Caco-2 (cell line): ENCODE measurements at regions of chr3 and their contacts with region 1.

Region 1: GRCh38 chr3:67605377-67605776 is 49.0 kb downstream of the SUCLG2 start:
- DNase-seq: peak in 1 of 2 experiments; percentile 18
- H3K4me3 ChIP-seq: no peak overlapping the region
- H3K4me3 Mint-ChIP-seq: peak overlapping the region; percentile 33
- H3K27ac Mint-ChIP-seq: peak overlapping the region; percentile 55
- H3K4me1 ChIP-seq: peaks cover 9% of the 10 kb centered on the region; the same call in 1 of the 2 replicates
- H3K4me1 Mint-ChIP-seq: peaks cover 20% of the 10 kb centered on the region
- H3K27me3 ChIP-seq: no peaks in the 10 kb centered on the region
- H3K27me3 Mint-ChIP-seq: no peaks in the 10 kb centered on the region
- CTCF ChIP-seq: peak in 1 of 2 experiments; percentile 20

Region 2: DNA sequence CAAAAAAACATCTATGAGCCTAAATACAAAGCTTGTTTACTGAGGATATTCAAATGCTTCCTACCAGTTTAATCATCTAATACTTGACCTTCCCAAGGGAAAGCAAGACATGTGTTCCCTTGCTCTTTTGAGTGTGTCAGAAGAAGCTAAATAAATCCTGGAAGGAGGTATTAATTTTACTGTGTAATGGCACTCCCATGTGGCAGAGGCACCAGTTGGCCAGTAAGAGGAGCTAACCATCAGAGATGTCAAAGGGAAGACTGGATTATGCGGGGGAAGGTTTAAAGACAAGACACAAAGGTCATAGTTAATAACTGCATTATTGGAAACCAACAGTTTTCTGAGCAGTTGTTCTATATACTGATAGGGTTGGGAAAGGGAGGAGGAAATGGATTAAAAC is 76.0 kb before region 1 on chr3:
- CTCF ChIA-PET with region 1: interaction called, 3 read pairs
- POLR2A ChIA-PET with region 1: no interaction called
- intact Hi-C with region 1: loop called (anchors 1 kb)
- DNase-seq: no peak
- H3K4me3 ChIP-seq: no peak overlapping the region
- H3K4me3 Mint-ChIP-seq: no peak overlapping the region
- H3K27ac Mint-ChIP-seq: no peak overlapping the region
- H3K4me1 ChIP-seq: no peaks in the 10 kb centered on the region
- H3K4me1 Mint-ChIP-seq: no peaks in the 10 kb centered on the region
- H3K27me3 ChIP-seq: no peaks in the 10 kb centered on the region
- H3K27me3 Mint-ChIP-seq: no peaks in the 10 kb centered on the region
- CTCF ChIP-seq: peak in 1 of 2 experiments; percentile 29